Thyroid gland (tissue), 4 donors: ENCODE measurements at regions of chr1 and their contacts with region 1.

Region 1: GRCh38 chr1:10796019-10796944 is at the start of gene CASZ1:
- DNase-seq: peak; percentile 83 to 86
- H3K4me3 ChIP-seq: peak within 1 kb of the TSS; percentile 16 to 55 (median 47)
- H3K27ac ChIP-seq: peak within 1 kb of the TSS in 1 of 3 donors; percentile 22
- H3K4me1 ChIP-seq: peaks cover 0 to 22% of the 10 kb centered on the region in 2 donors
- H3K27me3 ChIP-seq: no peaks in the 10 kb centered on the region
- CTCF ChIP-seq: peak in 1 of 6 experiments; percentile 30
- POLR2A ChIP-seq: peak in 1 of 2 donors; percentile 56
- total RNA-seq, gene CASZ1: 5.2 to 38.5 (median 18.7) TPM

Region 2: GRCh38 chr1:10694633-10695627 is 101.4 kb before region 1 on chr1:
- intact Hi-C with region 1: loop called (anchors 5 kb)
- DNase-seq: peak; percentile 93 to 94
- H3K4me3 ChIP-seq: peak overlapping the region in 2 of 3 donors; percentile 51 to 68
- H3K27ac ChIP-seq: peak overlapping the region; percentile 76 to 91 (median 81)
- H3K4me1 ChIP-seq: peaks cover 30 to 39% of the 10 kb centered on the region in 2 donors
- H3K27me3 ChIP-seq: no peaks in the 10 kb centered on the region
- CTCF ChIP-seq: no peak
- POLR2A ChIP-seq: peak in 1 of 2 donors; percentile 49

Region 3: DNA sequence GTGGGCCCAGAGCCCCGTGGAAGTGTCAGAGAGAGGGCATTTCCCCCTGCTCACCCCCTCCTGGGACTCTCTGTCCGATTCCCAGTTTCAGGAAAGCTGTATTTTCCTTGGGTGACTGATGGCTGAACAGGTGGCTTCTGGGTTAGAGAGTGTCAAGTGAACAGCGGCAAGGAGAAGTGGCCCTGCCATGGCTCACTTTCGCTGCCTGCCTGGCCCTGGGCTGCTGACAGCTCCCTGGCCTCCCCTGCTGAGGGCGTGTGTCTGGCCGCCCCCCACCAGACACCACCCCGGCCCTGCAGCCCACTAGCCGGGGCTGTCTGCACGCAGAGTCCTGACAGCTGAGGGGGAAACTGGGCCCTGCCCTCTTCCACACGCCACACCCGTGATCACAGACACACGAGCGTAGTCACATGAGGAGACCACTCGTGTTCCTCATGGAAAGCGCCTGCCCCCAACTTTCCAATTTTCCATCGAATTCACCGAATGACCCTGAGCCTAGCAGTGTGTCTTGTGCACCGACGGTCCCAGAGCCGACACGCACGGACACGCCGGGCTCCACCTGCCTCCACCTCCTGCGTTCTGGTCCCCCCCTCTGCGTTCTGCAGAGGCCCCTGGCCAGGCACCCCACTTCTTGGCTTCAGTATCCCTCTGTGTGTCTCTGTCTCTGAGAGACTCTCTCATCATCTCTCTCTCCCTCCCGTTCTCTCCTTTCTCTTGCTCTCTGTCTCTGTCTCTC is 60.7 kb after region 1 on chr1:
- intact Hi-C with region 1: no loop called
- DNase-seq: no peak
- H3K4me3 ChIP-seq: no peak overlapping the region
- H3K27ac ChIP-seq: no peak overlapping the region
- H3K4me1 ChIP-seq: peaks cover 0 to 5% of the 10 kb centered on the region in 2 donors
- H3K27me3 ChIP-seq: no peaks in the 10 kb centered on the region
- CTCF ChIP-seq: no peak
- POLR2A ChIP-seq: no peak